GM12878 (cell line): ENCODE measurements at regions of chr19 and their contacts with region 1.

Region 1: DNA sequence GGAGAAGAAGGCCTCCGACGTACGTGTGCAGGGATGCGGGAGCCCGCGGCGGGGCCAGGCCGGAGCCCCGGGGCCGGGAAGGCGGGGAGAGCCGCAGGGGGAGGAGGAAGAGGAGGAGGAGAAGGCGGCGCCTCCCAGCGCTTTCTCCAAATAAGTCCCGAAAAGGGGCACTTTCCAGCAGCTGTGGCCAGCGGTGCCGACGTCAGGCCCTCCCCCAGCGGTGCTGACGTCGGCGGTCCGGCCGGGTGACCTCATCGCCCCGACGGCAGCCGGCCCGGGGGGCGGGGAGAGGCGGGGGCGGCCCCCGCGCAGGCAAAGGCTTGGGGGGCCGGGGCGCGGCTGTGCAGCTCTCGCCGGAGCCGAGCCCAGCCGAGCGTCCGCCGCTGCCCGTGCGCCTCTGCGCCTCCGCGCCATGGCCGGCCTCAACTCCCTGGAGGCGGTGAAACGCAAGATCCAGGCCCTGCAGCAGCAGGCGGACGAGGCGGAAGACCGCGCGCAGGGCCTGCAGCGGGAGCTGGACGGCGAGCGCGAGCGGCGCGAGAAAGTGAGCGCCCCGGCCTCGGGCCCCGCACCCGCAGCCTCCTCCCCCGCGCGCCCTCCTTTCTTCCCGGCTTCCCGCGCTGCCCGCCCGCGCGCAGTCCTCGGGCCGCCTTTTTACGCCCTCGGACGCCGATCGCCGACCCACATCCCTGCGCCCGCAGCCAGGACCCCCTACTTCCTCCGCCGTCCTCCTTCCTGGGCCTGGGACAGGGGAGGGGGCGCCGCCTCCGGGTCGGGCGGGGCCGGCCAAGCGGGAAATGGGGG is at the start of gene TPM4:
- DNase-seq: peak; percentile 74
- ATAC-seq: peak; percentile 66
- H3K4me3 ChIP-seq: peak within 1 kb of the TSS; percentile 92
- H3K27ac ChIP-seq: peak within 1 kb of the TSS; percentile 99
- H3K4me1 ChIP-seq: peaks cover 17% of the 10 kb centered on the region
- H3K27me3 ChIP-seq: no peaks in the 10 kb centered on the region
- CTCF ChIP-seq: no peak
- EP300 ChIP-seq: peak in 1 of 2 experiments; percentile 26; a peak in 2 of 4 replicates
- POLR2A ChIP-seq: peak; percentile 92
- RAD21 ChIP-seq: no peak
- polyA plus RNA-seq, gene TPM4: 183 to 194 TPM

Region 2: DNA sequence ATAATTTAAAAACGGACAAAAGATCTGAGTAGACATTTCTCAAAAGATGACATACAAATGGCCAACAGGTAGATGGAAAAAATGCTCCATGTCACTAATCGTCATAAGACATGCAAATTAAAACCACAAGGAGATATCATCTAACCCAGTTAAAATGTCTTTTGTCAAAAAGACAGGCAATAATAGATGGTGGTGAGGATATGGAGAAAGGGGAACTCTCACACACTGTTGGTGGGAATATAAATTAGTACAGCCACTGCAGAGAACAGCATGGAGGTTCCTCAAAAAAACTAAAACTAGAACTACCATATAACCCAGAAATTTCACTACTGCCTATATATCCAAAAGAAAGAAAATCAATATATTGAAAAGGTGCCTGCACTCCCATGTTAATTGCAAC is 89.7 kb before region 1 on chr19:
- CTCF ChIA-PET with region 1: no interaction called
- POLR2A ChIA-PET with region 1: no interaction called
- RAD21 ChIA-PET with region 1: no interaction called
- SMC1A ChIA-PET with region 1: no interaction called
- in situ Hi-C with region 1: no loop called
- intact Hi-C with region 1: no loop called
- DNase-seq: no peak
- ATAC-seq: no peak
- H3K4me3 ChIP-seq: no peak overlapping the region
- H3K27ac ChIP-seq: no peak overlapping the region
- H3K4me1 ChIP-seq: no peaks in the 10 kb centered on the region
- H3K27me3 ChIP-seq: no peaks in the 10 kb centered on the region
- CTCF ChIP-seq: no peak
- EP300 ChIP-seq: no peak
- POLR2A ChIP-seq: no peak
- RAD21 ChIP-seq: no peak

Region 3: GRCh38 chr19:16041299-16041990 is 34.9 kb before region 1 on chr19:
- CTCF ChIA-PET with region 1: interaction called, 13 read pairs
- POLR2A ChIA-PET with region 1: no interaction called
- RAD21 ChIA-PET with region 1: interaction called, 6 read pairs
- SMC1A ChIA-PET with region 1: interaction called, 7 read pairs
- in situ Hi-C with region 1: no loop called
- intact Hi-C with region 1: no loop called
- DNase-seq: no peak
- ATAC-seq: peak; percentile 91
- H3K4me3 ChIP-seq: no peak overlapping the region
- H3K27ac ChIP-seq: no peak overlapping the region
- H3K4me1 ChIP-seq: no peaks in the 10 kb centered on the region
- H3K27me3 ChIP-seq: no peaks in the 10 kb centered on the region
- CTCF ChIP-seq: peak; percentile 92 to 93 (median 92)
- EP300 ChIP-seq: no peak
- POLR2A ChIP-seq: no peak
- RAD21 ChIP-seq: peak; percentile 88

Region 4: GRCh38 chr19:16062789-16063188 is 13.6 kb before region 1 on chr19:
- CTCF ChIA-PET with region 1: interaction called, 45 read pairs
- POLR2A ChIA-PET with region 1: interaction called, 7 read pairs
- RAD21 ChIA-PET with region 1: no interaction called
- SMC1A ChIA-PET with region 1: interaction called, 4 read pairs
- in situ Hi-C with region 1: no loop called
- intact Hi-C with region 1: no loop called
- DNase-seq: no peak
- ATAC-seq: peak; percentile 77
- H3K4me3 ChIP-seq: no peak overlapping the region
- H3K27ac ChIP-seq: no peak overlapping the region
- H3K4me1 ChIP-seq: peaks cover 6% of the 10 kb centered on the region; the same call in 1 of the 2 replicates
- H3K27me3 ChIP-seq: no peaks in the 10 kb centered on the region
- CTCF ChIP-seq: peak; percentile 60 to 95 (median 91)
- EP300 ChIP-seq: no peak
- POLR2A ChIP-seq: no peak
- RAD21 ChIP-seq: peak; percentile 25

Region 5: DNA sequence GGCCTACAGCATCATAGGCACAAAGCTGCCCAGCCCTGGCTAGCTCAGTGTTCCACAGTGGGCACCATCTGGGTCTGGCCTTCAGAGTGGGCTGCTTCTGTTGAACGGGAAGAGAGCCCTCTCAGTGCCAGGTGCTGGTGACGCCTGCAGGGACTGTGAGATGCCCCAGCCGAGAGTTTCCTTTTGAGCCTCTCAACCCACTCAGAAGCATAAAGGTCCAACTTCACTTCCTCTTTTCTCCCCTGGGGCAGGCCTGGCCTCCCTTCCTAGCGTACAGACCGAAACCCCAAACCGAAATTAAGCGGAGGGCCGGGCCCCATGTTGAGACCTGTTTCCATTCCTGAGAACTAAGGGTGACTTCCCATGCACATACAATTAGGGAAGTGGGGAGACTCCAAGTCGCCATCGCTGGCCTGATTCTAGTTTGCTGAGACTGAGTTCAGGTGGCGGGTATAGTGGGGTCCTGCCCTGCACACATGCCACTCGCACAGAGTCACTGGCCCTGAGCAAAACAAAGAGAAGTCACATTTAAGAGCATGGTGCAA is 42.2 kb after region 1 on chr19:
- CTCF ChIA-PET with region 1: interaction called, 26 read pairs
- POLR2A ChIA-PET with region 1: interaction called, 16 read pairs
- RAD21 ChIA-PET with region 1: interaction called, 7 read pairs
- SMC1A ChIA-PET with region 1: interaction called, 7 read pairs
- in situ Hi-C with region 1: no loop called
- intact Hi-C with region 1: loop called (anchors 2 kb)
- DNase-seq: peak; percentile 97
- ATAC-seq: peak; percentile 82
- H3K4me3 ChIP-seq: peak overlapping the region; percentile 59; the same call in 1 of the 2 replicates
- H3K27ac ChIP-seq: peak overlapping the region; percentile 100
- H3K4me1 ChIP-seq: peaks cover 62% of the 10 kb centered on the region
- H3K27me3 ChIP-seq: no peaks in the 10 kb centered on the region
- CTCF ChIP-seq: no peak
- EP300 ChIP-seq: peak; percentile 95 to 99
- POLR2A ChIP-seq: peak; percentile 80
- RAD21 ChIP-seq: no peak

Region 6: DNA sequence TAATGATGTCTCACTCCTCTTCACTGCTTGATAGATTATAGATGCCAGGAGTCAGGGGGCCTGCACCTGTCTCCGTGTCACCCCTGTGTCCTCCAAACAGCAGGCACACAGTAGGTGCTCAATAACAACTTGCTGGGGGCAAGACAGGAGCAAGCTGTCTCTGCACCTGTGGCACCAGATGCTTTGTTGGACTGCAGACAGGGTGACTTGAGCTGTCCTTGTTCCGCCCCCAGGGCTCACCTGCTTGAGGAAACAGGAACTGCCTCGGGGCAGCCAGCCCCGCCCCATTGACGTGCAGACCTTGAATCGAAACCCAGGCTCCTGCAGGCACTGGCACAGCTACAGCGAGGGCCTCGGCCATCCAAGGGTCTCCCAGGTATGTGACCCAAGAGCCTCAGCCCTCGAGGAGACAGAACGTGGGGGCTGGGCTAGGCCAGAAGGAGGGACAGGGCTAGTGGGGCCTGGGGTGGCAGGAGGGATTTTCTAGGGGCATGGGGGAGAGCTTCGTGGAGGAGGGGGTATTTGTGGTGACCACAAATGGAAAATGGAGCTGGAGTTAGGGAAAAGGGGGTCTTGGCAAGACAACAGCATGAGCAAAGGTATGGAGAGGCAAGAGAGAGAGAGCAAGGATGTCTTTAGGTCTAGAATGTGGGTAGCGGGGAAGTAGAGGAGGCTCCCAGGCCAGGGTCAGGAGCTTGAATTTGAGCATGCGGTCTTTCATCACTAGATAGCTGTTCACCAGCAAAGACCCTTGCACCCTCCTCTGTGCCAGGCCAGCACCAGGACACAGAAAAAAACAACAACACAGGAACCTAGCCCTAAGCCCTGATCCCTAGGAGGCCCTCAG is 67.3 kb after region 1 on chr19 and contains the start of gene HSH2D:
- CTCF ChIA-PET with region 1: interaction called, 4 read pairs
- POLR2A ChIA-PET with region 1: interaction called, 36 read pairs
- RAD21 ChIA-PET with region 1: interaction called, 5 read pairs
- SMC1A ChIA-PET with region 1: interaction called, 7 read pairs
- in situ Hi-C with region 1: no loop called
- intact Hi-C with region 1: no loop called
- DNase-seq: peak; percentile 90
- ATAC-seq: peak; percentile 70
- H3K4me3 ChIP-seq: peak within 1 kb of the TSS; percentile 92
- H3K27ac ChIP-seq: peak within 1 kb of the TSS; percentile 99
- H3K4me1 ChIP-seq: peaks cover 37% of the 10 kb centered on the region
- H3K27me3 ChIP-seq: no peaks in the 10 kb centered on the region
- CTCF ChIP-seq: no peak
- EP300 ChIP-seq: peak in 1 of 2 experiments; percentile 81; a peak in 1 of 4 replicates
- POLR2A ChIP-seq: peak; percentile 97
- RAD21 ChIP-seq: no peak
- polyA plus RNA-seq, gene HSH2D: 22.0 to 27.2 TPM

Region 7: GRCh38 chr19:16446724-16447368 is 370.5 kb after region 1 on chr19:
- CTCF ChIA-PET with region 1: no interaction called
- POLR2A ChIA-PET with region 1: no interaction called
- RAD21 ChIA-PET with region 1: no interaction called
- SMC1A ChIA-PET with region 1: no interaction called
- in situ Hi-C with region 1: no loop called
- intact Hi-C with region 1: loop called (anchors 5 kb)
- DNase-seq: peak; percentile 70
- ATAC-seq: peak; percentile 71
- H3K4me3 ChIP-seq: peak overlapping the region; percentile 12; the same call in 1 of the 2 replicates
- H3K27ac ChIP-seq: peak overlapping the region; percentile 99
- H3K4me1 ChIP-seq: peaks cover 86% of the 10 kb centered on the region
- H3K27me3 ChIP-seq: no peaks in the 10 kb centered on the region
- CTCF ChIP-seq: no peak
- EP300 ChIP-seq: peak in 1 of 2 experiments; percentile 83; a peak in 2 of 4 replicates
- POLR2A ChIP-seq: peak; percentile 53
- RAD21 ChIP-seq: no peak